ENCODE measurements at regions of chr4 and their contacts with region 1.

Region 1: GRCh38 chr4:70839589-70840093 is at the start of gene GRSF1:
- DNase-seq: peak; percentile 97
- H3K4me3 Mint-ChIP-seq: peak within 1 kb of the TSS; percentile 98
- H3K27ac Mint-ChIP-seq: peak within 1 kb of the TSS; percentile 97
- H3K4me1 Mint-ChIP-seq: peaks cover 34% of the 10 kb centered on the region
- H3K27me3 Mint-ChIP-seq: no peaks in the 10 kb centered on the region
- total RNA-seq, gene GRSF1: 66.7 to 75.0 TPM

Region 2: GRCh38 chr4:70704331-70705145 is 135.1 kb before region 1 on chr4:
- CTCF ChIA-PET with region 1: interaction called, 6 read pairs
- intact Hi-C with region 1: loop called (anchors 1 kb)
- DNase-seq: peak; percentile 69
- H3K4me3 Mint-ChIP-seq: peak overlapping the region; percentile 81
- H3K27ac Mint-ChIP-seq: peak overlapping the region; percentile 85
- H3K4me1 Mint-ChIP-seq: peaks cover 27% of the 10 kb centered on the region
- H3K27me3 Mint-ChIP-seq: no peaks in the 10 kb centered on the region

Region 3: GRCh38 chr4:70801265-70801809 is 38.3 kb before region 1 on chr4:
- CTCF ChIA-PET with region 1: no interaction called
- intact Hi-C with region 1: loop called (anchors 1 kb)
- DNase-seq: peak; percentile 51
- H3K4me3 Mint-ChIP-seq: no peak overlapping the region
- H3K27ac Mint-ChIP-seq: no peak overlapping the region
- H3K4me1 Mint-ChIP-seq: peaks cover 21% of the 10 kb centered on the region
- H3K27me3 Mint-ChIP-seq: no peaks in the 10 kb centered on the region

Region 4: GRCh38 chr4:70863099-70863790 is 23.6 kb after region 1 on chr4:
- CTCF ChIA-PET with region 1: interaction called, 3 read pairs
- intact Hi-C with region 1: loop called (anchors 1 kb)
- DNase-seq: peak; percentile 53
- H3K4me3 Mint-ChIP-seq: no peak overlapping the region
- H3K27ac Mint-ChIP-seq: no peak overlapping the region
- H3K4me1 Mint-ChIP-seq: peaks cover 11% of the 10 kb centered on the region
- H3K27me3 Mint-ChIP-seq: no peaks in the 10 kb centered on the region

Region 5: DNA sequence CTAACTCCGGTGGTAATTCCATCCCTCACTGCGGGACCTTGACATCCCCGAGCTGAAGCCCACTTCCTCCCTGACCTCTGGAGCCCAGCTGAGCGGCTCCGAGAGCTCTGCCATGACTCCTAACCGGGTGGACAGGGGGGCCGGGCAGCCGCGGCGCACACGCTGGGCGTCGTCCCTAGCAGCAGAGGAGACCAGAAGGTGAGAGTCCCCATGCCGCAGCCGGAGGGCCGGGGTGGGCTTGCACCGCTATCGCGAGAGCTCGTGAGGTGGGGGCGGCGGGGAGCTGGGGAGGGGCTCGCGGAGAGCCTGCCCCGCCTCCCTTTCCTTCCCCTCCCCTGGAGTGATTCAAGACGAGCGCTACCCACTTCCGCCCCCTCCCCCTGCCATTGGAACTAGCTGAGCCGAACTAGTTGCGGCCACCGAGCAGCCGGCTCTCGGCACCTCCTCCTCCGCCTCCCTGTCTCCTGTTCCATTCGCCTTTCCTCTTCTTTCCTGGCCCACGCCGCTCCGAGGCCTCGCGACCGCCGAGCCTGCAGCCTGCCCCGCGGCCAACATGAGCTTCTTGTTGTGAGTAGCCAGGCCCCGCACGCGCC is 62.4 kb after region 1 on chr4 and contains the start of gene MOB1B:
- CTCF ChIA-PET with region 1: no interaction called
- intact Hi-C with region 1: loop called (anchors 1 kb)
- DNase-seq: peak; percentile 92
- H3K4me3 Mint-ChIP-seq: peak within 1 kb of the TSS; percentile 88
- H3K27ac Mint-ChIP-seq: peak within 1 kb of the TSS; percentile 54
- H3K4me1 Mint-ChIP-seq: peaks cover 31% of the 10 kb centered on the region
- H3K27me3 Mint-ChIP-seq: no peaks in the 10 kb centered on the region
- total RNA-seq, gene MOB1B: 14.4 to 16.2 TPM

Region 6: DNA sequence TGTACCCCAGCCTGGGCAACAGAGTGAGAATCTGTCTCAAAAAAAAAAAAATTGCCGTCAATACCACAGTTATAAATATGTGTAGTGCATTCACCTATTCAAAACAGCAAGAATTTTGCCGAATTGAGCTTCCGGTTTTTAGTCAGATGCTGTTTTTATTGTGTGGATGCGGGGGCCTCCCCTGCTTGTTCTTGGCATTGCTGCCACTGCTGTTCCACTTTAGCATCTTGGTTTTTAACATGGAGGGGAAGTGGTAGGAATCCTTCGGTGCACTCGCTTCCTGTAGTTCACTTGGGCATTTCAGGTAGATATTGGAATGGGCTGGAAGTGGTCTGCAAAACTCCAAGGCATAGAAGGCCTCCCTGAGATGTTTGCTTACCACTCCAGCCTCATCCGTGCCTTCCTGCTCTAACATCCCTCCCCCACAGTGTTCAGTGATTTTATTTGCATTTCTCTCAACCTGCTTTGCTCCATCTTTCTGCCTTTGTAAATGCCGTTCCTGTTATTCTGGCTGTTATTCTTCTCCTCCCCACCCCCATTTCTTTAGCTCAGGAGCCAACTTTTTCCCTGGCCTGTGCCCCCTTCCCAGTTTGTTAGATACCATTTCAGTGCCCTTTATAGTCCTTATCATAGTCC is 88.0 kb after region 1 on chr4:
- CTCF ChIA-PET with region 1: no interaction called
- intact Hi-C with region 1: loop called (anchors 1 kb)
- DNase-seq: peak; percentile 73
- H3K4me3 Mint-ChIP-seq: peak overlapping the region; percentile 51
- H3K27ac Mint-ChIP-seq: peak overlapping the region; percentile 66
- H3K4me1 Mint-ChIP-seq: peaks cover 28% of the 10 kb centered on the region
- H3K27me3 Mint-ChIP-seq: no peaks in the 10 kb centered on the region

Region 7: DNA sequence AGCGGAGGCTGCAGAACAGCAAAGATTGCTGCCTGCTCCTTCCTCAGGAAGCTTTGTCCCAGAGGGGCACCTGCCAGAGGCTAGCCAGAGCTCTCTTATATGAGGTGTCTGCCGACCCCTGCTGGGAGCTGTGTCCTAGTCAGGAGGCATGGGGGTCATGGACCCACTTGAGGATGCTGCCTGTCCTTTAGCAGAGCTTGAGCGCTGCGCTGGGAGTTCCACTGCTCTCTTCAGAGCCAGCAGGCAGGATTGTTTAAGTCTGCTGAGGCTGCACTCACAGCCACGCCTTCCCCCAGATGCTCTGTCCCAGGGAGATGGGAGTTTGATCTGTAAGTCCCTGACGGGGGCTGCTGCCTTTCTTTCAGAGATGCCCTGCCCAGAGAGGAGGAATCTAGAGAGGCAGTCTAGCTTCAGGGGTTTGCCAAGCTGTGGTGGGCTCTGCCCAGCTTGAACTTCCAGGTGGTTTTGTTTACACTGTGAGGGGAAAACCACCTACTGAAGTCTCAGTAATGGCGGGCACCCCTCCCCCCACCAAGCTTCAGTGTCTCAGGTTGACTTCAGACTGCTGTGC is 164.7 kb after region 1 on chr4:
- CTCF ChIA-PET with region 1: interaction called, 3 read pairs
- intact Hi-C with region 1: loop called (anchors 2 kb)
- DNase-seq: peak; percentile 82
- H3K4me3 Mint-ChIP-seq: peak overlapping the region; percentile 26
- H3K27ac Mint-ChIP-seq: peak overlapping the region; percentile 1
- H3K4me1 Mint-ChIP-seq: peaks cover 77% of the 10 kb centered on the region
- H3K27me3 Mint-ChIP-seq: no peaks in the 10 kb centered on the region

Measured in activated naive CD4-positive, alpha-beta T cell treated with anti-CD3 and anti-CD28 coated beads for 36 hours (primary cell).